Tibial artery (tissue), 4 donors: ENCODE measurements at regions of chr18 and their contacts with region 1.

Region 1: GRCh38 chr18:36828630-36829361 is at the starts of genes KIAA1328 and TPGS2:
- DNase-seq: peak; percentile 83 to 90
- H3K4me3 ChIP-seq: peak within 1 kb of the TSS; percentile 73 to 77
- H3K27ac ChIP-seq: peak within 1 kb of the TSS; percentile 73 to 85
- H3K4me1 ChIP-seq: peaks cover 0 to 28% (median 11%) of the 10 kb centered on the region in 4 donors
- H3K27me3 ChIP-seq: no peaks in the 10 kb centered on the region
- CTCF ChIP-seq: peak in 1 of 2 experiments; percentile 26

Region 2: DNA sequence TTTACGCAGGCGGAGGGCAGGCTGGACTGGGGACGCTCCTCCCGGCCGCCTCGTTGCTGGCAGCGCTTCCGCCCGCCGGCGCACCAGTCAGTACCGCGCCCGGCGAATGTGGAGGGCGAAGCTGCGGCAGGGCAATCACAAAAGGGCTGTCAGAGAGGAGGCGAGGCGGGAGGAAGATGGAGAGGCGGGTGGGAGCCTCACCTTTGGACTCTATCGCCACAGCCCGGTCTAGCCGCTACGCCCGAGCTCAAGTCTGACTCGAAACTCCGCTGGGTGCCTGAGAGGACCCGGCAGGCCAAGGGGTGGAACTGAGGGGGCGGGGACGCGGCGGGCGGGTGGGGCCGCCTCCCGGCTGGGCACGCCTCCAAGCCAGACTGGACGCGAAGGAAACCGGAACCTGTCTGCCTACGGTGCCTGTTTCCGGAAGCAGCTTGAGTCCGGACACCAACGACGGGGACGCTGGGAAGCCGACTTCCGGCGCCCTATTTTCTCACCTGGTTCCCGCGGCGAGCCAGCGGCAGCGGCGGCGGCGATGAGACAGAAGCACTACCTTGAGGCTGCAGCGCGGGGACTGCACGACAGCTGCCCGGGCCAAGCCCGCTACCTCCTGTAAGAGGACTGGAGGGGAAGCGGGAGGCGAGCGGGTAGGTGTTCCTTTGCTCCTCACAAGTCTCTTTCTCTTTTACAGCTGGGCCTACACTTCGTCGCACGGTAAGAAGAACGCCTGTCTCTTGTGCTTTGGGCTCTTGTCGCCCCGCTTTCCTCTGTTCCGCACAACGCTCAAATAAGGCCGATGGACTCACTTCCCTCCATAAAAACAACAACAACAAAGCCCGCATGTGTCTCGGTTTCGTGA is 856.4 kb before region 1 on chr18 and contains the start of gene RMP24:
- intact Hi-C with region 1: loop called (anchors 5 kb)
- DNase-seq: peak; percentile 91 to 96
- H3K4me3 ChIP-seq: peak within 1 kb of the TSS; percentile 75 to 92
- H3K27ac ChIP-seq: peak within 1 kb of the TSS; percentile 81 to 85
- H3K4me1 ChIP-seq: peaks cover 0 to 21% (median 15%) of the 10 kb centered on the region in 4 donors
- H3K27me3 ChIP-seq: no peaks in the 10 kb centered on the region
- CTCF ChIP-seq: no peak

Region 3: GRCh38 chr18:36786686-36787085 is 42.1 kb before region 1 on chr18:
- intact Hi-C with region 1: no loop called
- DNase-seq: peak; percentile 78 to 88
- H3K4me3 ChIP-seq: no peak overlapping the region
- H3K27ac ChIP-seq: peak overlapping the region; percentile 68 to 83
- H3K4me1 ChIP-seq: peaks cover 0 to 28% (median 19%) of the 10 kb centered on the region in 4 donors
- H3K27me3 ChIP-seq: no peaks in the 10 kb centered on the region
- CTCF ChIP-seq: no peak

Region 4: GRCh38 chr18:36889321-36889720 is 60.5 kb after region 1 on chr18:
- intact Hi-C with region 1: no loop called
- DNase-seq: no peak
- H3K4me3 ChIP-seq: no peak overlapping the region
- H3K27ac ChIP-seq: peak overlapping the region in 1 of 2 donors; percentile 10
- H3K4me1 ChIP-seq: peaks cover 0 to 26% (median 23%) of the 10 kb centered on the region in 4 donors
- H3K27me3 ChIP-seq: no peaks in the 10 kb centered on the region
- CTCF ChIP-seq: no peak